ENCODE measurements at regions of chr10 and their contacts with region 1.

Region 1: GRCh38 chr10:131943021-131943814 is 38.5 kb downstream of the BNIP3 start:
- DNase-seq: no peak
- ATAC-seq: peak; percentile 76

Region 2: DNA sequence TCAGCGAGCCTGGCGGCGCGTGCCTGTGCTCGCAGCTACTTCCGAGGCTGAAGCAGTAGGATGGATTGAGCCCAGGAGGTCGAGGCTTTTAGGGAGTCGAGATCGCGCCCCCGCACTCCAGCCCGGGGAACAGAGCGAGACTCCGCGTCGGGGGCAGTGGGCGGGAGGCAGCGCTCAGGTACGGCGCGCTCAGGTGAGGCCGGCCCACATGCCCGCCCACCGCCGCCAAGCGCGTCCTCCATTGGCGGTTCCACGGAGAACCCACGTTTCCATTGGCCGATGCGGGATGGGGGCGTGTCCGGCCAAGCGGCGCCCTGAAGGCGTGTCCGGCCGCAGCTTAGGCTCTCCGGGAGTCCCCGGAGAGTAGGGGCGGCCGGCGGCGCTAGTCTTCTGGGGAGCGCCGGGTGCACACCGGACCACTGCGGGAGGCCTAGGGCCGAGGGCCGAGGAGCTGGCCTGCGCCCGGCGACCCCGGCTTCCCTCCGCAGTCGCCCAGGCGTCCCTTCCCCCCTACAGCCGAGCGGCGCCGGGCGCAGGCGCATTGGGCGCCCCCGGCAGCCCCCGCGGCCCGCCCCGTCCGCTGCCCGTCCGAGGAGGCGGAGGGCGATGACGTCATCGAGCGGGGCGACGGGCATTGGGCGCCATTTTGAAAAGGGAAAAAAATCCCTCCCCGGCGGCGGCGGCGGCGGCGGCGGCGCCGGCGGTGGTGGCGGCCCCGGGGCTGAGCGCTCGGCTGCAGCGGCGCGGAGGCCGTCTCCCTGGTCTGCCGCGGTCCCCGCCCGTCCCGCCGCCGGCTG is 42.7 kb before region 1 on chr10 and contains the start of gene PPP2R2D:
- intact Hi-C with region 1: loop called (anchors 5 kb)
- DNase-seq: peak; percentile 96
- ATAC-seq: peak; percentile 97
- total RNA-seq, gene PPP2R2D: 36.6 TPM

Region 3: GRCh38 chr10:132023092-132023811 is 80.0 kb after region 1 on chr10:
- intact Hi-C with region 1: no loop called
- DNase-seq: peak; percentile 88
- ATAC-seq: peak; percentile 88

Region 4: GRCh38 chr10:132257271-132257670 is 314.1 kb after region 1 on chr10:
- intact Hi-C with region 1: no loop called
- DNase-seq: no peak
- ATAC-seq: no peak